SK-N-SH (cell line): ENCODE measurements at regions of chrX and their contacts with region 1.

Region 1: DNA sequence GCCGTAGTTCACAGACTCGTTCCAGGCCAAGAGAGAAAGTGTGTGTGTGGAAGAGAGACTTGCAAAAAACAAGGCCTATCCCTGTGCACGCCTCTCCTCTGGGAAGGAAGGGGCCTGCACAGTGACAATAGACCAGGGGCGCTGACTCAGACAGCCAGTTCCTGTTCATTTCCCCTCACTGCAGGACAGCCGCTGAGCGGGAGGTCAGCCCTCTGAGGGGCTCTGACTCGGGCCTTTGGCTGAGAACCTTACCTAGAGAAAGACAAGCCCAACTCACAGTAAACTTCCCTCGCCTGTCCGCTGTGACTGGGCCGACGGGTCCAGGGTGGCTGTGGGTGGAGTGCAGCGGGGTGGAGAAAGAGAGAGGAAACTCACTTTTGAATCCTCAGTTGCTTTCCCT is 52.1 kb downstream of the RTL5 start:
- DNase-seq: no peak
- H3K4me3 ChIP-seq: no peak overlapping the region
- H3K27ac ChIP-seq: peak overlapping the region in 1 of 2 experiments; percentile 95; a peak in 2 of 4 replicates
- H3K4me1 ChIP-seq: peaks cover 0 to 66% of the 10 kb centered on the region in 2 experiments; a peak in 2 of 4 replicates
- H3K27me3 ChIP-seq: peaks cover 5% of the 10 kb centered on the region
- CTCF ChIP-seq: no peak
- EP300 ChIP-seq: no peak
- RAD21 ChIP-seq: no peak

Region 2: DNA sequence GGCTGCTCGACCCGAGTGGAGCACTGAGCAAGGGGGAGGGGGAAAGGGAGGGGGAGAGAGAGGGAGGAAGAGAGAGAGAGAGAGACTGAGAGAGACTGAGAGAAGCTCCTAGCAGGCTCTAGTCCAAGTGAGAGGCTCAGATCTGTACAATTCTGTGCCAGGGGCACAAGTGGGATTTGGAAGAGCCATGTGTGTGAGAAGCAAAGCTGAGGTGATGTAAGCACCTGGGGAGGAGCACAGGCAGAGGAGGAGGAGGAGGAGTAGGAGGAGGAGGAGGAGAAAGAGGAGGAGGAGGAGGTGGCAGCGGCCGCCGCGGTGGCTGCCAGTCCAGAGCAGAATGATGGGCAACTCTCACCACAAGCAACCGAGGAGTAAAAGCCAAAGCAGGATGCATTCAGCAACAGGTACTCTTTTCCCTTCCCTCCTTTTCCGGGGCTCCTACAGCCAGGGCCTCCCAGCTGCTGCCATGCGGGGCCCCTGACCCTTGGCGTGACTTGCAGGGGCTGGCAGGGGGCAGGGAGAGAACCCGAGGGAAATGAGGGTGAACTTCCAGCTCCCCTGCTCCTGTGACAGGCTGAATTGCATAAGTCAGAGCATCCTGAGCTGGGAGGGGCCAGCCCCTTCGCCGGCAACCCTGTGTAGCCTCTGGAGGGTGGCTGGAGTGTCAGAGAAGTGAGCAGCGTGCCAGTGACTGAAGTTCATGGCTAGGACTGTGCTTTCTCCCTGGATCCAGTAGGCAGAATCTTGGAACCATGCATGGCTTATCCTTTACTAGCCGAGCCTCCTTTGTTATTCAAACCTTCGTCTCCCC is 10.1 kb before region 1 on chrX:
- CTCF ChIA-PET with region 1: interaction called, 10 read pairs
- POLR2A ChIA-PET with region 1: interaction called, 7 read pairs
- DNase-seq: no peak
- H3K4me3 ChIP-seq: peak overlapping the region in 1 of 2 experiments; percentile 40; a peak in 2 of 4 replicates
- H3K27ac ChIP-seq: peak overlapping the region in 1 of 2 experiments; percentile 45; a peak in 2 of 4 replicates
- H3K4me1 ChIP-seq: peaks cover 0 to 30% of the 10 kb centered on the region in 2 experiments; a peak in 1 of 4 replicates
- H3K27me3 ChIP-seq: peaks cover 67% of the 10 kb centered on the region
- CTCF ChIP-seq: no peak
- EP300 ChIP-seq: no peak
- RAD21 ChIP-seq: no peak

Region 3: DNA sequence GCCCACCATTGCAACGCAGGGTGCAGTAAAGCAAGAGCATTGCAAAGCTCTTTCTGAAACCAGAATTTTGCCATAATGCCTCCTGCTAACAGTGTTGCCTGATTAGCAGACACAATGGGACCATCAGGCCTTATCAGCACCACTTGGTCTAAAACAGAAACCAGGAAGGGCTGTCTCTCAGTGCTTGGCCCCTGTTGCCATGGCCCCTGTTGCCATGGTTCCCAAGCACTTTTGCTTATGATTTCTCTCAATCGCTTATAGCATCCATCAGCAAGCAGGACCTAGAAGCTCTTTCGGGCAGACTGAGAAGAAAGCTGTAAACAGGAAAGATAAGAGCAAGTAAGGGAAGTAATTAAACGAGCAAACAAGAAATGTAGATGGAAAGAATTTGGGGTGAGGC is 15.3 kb after region 1 on chrX:
- CTCF ChIA-PET with region 1: interaction called, 22 read pairs
- POLR2A ChIA-PET with region 1: interaction called, 7 read pairs
- DNase-seq: peak; percentile 90
- H3K4me3 ChIP-seq: no peak overlapping the region; a peak in 1 of 4 replicates
- H3K27ac ChIP-seq: peak overlapping the region in 1 of 2 experiments; percentile 96; a peak in 2 of 4 replicates
- H3K4me1 ChIP-seq: peaks cover 0 to 20% of the 10 kb centered on the region in 2 experiments; a peak in 2 of 4 replicates
- H3K27me3 ChIP-seq: no peaks in the 10 kb centered on the region; the same call in 1 of the 2 replicates
- CTCF ChIP-seq: no peak
- EP300 ChIP-seq: peak in 1 of 2 experiments; percentile 54; a peak in 1 of 4 replicates
- RAD21 ChIP-seq: no peak; the same call in 1 of the 2 replicates